ENCODE measurements at regions of chr20 and their contacts with region 1.

Region 1: DNA sequence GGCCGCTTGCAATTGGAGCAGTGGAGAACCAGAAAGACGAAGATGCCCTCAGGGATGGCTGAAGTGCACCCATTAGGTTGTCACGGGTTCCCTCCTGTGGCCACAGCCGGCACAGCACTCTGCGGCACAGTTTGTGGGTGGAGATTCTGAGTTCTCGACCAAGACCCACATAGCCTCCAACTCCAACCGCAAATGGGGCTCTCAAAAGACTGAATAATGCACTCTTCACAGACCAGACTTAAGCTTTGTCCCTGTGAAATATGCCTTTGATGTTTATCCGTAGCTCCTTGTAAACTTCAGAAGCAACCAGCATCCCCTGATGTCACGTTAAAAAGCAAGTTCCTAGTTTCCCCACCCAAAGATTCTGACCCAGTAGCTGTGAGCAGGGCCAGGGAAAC is 934 bp upstream of the CST9 start:
- DNase-seq: peak; percentile 77 to 84
- ATAC-seq: peak; percentile 85 to 94 (median 89)
- H3K4me3 ChIP-seq: no peak overlapping the region
- H3K27ac ChIP-seq: no peak overlapping the region
- H3K4me1 ChIP-seq: peaks cover 0 to 10% (median 0%) of the 10 kb centered on the region in 9 donors
- H3K27me3 ChIP-seq: peaks cover 0 to 24% (median 10%) of the 10 kb centered on the region in 7 donors
- CTCF ChIP-seq: peak; percentile 80 to 92 (median 89)

Region 2: GRCh38 chr20:22684072-22684762 is 922.4 kb before region 1 on chr20:
- intact Hi-C with region 1: loop called in 1 of 10 experiments (anchors 10 kb)
- DNase-seq: peak; percentile 48 to 69
- ATAC-seq: peak; percentile 71 to 87 (median 81)
- H3K4me3 ChIP-seq: no peak overlapping the region
- H3K27ac ChIP-seq: no peak overlapping the region
- H3K4me1 ChIP-seq: peaks cover 0 to 22% (median 11%) of the 10 kb centered on the region in 9 donors
- H3K27me3 ChIP-seq: peaks cover 0 to 17% (median 3%) of the 10 kb centered on the region in 7 donors
- CTCF ChIP-seq: peak; percentile 83 to 90 (median 87)

Region 3: DNA sequence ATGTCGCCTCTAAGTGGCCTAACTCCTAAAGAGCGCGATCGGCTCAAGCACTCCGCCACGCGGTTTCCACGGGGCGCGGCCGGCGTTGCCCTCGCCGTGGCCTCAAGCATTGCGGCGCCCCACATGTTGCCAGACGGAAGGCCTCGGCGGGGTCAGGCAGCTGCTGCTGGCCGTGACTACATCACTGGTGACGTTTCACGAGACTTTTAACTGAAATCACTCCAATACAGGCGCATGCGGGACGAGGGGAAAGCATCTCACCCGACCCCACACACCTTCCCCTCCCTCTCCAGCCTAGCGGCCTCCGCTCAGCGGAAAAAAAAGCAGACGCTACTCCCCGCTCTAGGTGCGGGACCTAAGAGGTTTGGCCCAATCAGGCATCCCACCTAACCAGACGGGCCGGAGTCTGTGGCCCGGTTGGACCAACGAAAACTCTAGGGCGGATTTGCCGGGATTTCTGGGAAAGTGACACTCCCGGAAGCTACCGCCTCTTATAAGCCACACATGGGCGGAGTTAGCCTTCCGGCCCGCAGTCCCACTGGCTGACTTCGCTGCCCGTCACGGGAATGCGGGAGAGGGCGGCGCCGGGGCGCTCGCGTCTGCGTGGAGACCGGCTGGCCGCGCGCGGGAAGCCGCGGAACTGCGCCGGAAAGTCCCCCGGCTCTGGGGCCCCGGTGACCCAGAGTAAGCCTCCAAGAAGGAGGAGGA is 256.3 kb before region 1 on chr20 and contains the start of gene NXT1:
- intact Hi-C with region 1: loop called in 3 of 10 experiments (anchors 5 kb)
- DNase-seq: peak; percentile 97 to 98
- ATAC-seq: peak; percentile 93 to 97 (median 96)
- H3K4me3 ChIP-seq: peak within 1 kb of the TSS; percentile 78 to 97 (median 86)
- H3K27ac ChIP-seq: peak within 1 kb of the TSS; percentile 88 to 100 (median 98)
- H3K4me1 ChIP-seq: peaks cover 3 to 29% (median 24%) of the 10 kb centered on the region in 9 donors
- H3K27me3 ChIP-seq: no peaks in the 10 kb centered on the region
- CTCF ChIP-seq: no peak
- total RNA-seq, gene NXT1: 4.5 to 12.9 (median 6.5) TPM

Region 4: GRCh38 chr20:23361598-23362384 is 244.9 kb before region 1 on chr20 and contains the start of gene GZF1:
- intact Hi-C with region 1: loop called in 1 of 10 experiments (anchors 10 kb)
- DNase-seq: peak; percentile 97 to 99
- ATAC-seq: peak; percentile 85 to 95 (median 90)
- H3K4me3 ChIP-seq: peak within 1 kb of the TSS; percentile 64 to 93 (median 87)
- H3K27ac ChIP-seq: peak within 1 kb of the TSS; percentile 97 to 100 (median 100)
- H3K4me1 ChIP-seq: peaks cover 10 to 81% (median 59%) of the 10 kb centered on the region in 9 donors
- H3K27me3 ChIP-seq: no peaks in the 10 kb centered on the region
- CTCF ChIP-seq: peak in 5 of 9 donors; percentile 2 to 35 (median 13)
- total RNA-seq, gene GZF1: 20.6 to 42.7 (median 28.8) TPM

Region 5: DNA sequence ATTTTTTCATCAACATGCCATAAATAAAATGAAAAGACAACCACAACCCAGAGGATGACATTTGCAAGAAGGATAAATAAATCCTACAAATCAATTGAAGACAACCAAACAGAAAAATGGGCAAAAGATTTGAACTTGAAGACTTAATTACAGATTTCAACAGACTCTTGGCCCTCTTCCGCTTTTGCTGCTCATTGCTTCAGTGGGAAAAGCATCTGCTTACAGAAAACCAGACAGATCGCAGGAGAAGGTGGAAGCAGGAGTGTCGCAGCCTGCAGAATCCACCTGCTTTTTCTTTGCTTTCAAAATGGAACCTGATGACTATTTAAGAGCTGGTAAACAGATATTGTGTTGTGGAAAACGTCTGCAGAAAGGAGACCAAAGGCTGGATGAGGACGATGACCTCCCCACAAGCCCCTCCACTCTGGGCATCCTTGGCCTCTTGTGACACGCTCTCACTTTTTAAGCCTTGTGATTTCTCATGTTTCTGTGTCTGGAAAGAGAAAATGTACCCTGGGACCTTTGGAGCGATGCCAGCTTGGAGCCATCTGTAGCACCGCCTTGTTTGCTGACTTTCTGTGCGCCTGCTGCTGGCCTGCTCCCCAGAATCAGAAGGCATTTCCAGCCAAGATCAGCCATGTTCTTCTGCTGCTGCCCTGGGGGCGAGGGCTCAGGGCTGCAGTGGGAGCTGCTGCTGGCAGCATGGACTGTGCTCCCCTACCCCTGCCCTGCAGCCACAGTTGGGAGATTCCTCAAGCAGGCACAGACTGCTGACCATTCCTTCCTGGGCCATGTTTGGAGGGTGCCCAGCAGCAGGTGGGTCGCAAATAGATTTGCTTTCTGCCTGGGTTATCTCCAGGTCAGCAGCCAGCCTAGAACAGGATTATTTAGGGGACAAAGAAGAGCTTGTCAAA is 170.8 kb before region 1 on chr20:
- intact Hi-C with region 1: loop called in 7 of 10 experiments (anchors 5 kb)
- DNase-seq: peak; percentile 24 to 29
- ATAC-seq: peak in 5 of 8 donors; percentile 22 to 52 (median 34)
- H3K4me3 ChIP-seq: no peak overlapping the region
- H3K27ac ChIP-seq: no peak overlapping the region
- H3K4me1 ChIP-seq: peaks cover 0 to 14% (median 3%) of the 10 kb centered on the region in 9 donors
- H3K27me3 ChIP-seq: no peaks in the 10 kb centered on the region
- CTCF ChIP-seq: no peak

Region 6: GRCh38 chr20:23441850-23442313 is 164.8 kb before region 1 on chr20:
- intact Hi-C with region 1: loop called (anchors 2 to 5 kb)
- DNase-seq: peak; percentile 31 to 72
- ATAC-seq: peak; percentile 59 to 82 (median 75)
- H3K4me3 ChIP-seq: no peak overlapping the region
- H3K27ac ChIP-seq: no peak overlapping the region
- H3K4me1 ChIP-seq: peaks cover 0 to 3% (median 0%) of the 10 kb centered on the region in 9 donors
- H3K27me3 ChIP-seq: no peaks in the 10 kb centered on the region
- CTCF ChIP-seq: peak; percentile 70 to 92 (median 86)

Region 7: GRCh38 chr20:23568320-23568970 is 38.2 kb before region 1 on chr20 and contains the start of gene CST9L:
- intact Hi-C with region 1: no loop called
- DNase-seq: no peak
- ATAC-seq: no peak
- H3K4me3 ChIP-seq: no peak within 1 kb of the TSS
- H3K27ac ChIP-seq: no peak within 1 kb of the TSS
- H3K4me1 ChIP-seq: no peaks in the 10 kb centered on the region
- H3K27me3 ChIP-seq: peaks cover 0 to 16% (median 0%) of the 10 kb centered on the region in 7 donors
- CTCF ChIP-seq: no peak
- total RNA-seq, gene CST9L: not detected

Region 8: GRCh38 chr20:23585808-23586734 is 20.6 kb before region 1 on chr20:
- intact Hi-C with region 1: no loop called
- DNase-seq: no peak
- ATAC-seq: no peak
- H3K4me3 ChIP-seq: no peak overlapping the region
- H3K27ac ChIP-seq: no peak overlapping the region
- H3K4me1 ChIP-seq: no peaks in the 10 kb centered on the region
- H3K27me3 ChIP-seq: peaks cover 0 to 39% (median 13%) of the 10 kb centered on the region in 7 donors
- CTCF ChIP-seq: no peak

Region 9: DNA sequence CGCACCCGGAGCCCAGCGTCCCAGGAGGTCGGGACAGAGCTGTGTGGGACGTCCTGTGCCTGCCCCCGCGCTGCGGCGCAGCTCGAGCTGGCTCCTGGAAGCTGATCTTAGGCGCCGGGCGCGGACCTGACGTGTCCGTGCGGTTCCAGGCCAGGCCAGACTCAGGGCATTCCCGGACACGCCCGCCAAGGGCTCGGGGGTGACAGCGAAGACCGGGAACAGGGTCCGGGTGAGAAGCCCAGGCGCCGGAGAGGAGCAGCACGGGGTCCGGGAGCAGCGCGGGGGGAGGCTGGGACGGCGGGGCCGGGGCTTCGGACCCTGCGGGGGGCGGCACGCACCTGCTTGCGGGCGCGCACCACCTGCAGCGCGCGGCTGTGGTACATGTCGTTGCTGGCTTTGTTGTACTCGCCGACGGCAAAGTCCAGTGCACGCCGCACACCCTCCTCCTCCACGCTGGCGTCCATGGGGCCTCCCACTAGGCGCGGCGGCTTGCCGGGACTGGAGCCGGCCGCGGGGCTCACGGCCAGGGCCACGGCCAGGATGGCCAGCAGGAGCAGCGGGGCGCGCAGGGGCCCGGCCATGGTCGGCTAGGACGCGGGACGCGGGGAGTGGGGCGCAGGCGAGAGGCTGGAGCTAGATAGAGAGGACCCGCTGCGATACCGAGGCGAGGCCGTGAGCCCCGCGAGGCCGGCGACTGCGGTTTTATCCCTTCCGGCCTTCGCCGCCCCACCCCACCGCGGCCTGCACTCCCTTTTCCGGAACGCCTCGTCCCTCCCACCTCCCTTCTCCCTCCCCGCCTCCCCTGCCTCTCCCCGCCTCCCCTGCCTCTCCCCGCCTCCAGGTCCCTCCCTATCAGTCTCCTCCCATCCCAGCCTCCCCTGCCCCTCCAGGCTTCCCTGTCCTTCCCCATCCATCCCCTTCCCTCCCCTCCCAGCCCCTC is 30.9 kb after region 1 on chr20 and contains the start of gene CST3:
- intact Hi-C with region 1: loop called in 1 of 10 experiments (anchors 2 kb)
- DNase-seq: peak; percentile 94
- ATAC-seq: peak; percentile 77 to 94 (median 90)
- H3K4me3 ChIP-seq: peak within 1 kb of the TSS; percentile 73 to 100 (median 93)
- H3K27ac ChIP-seq: peak within 1 kb of the TSS; percentile 92 to 100 (median 98)
- H3K4me1 ChIP-seq: peaks cover 5 to 61% (median 40%) of the 10 kb centered on the region in 9 donors
- H3K27me3 ChIP-seq: no peaks in the 10 kb centered on the region
- CTCF ChIP-seq: peak in 2 of 9 donors; percentile 6 to 8
- total RNA-seq, gene CST3: 395 to 1,066 (median 576) TPM

Region 10: DNA sequence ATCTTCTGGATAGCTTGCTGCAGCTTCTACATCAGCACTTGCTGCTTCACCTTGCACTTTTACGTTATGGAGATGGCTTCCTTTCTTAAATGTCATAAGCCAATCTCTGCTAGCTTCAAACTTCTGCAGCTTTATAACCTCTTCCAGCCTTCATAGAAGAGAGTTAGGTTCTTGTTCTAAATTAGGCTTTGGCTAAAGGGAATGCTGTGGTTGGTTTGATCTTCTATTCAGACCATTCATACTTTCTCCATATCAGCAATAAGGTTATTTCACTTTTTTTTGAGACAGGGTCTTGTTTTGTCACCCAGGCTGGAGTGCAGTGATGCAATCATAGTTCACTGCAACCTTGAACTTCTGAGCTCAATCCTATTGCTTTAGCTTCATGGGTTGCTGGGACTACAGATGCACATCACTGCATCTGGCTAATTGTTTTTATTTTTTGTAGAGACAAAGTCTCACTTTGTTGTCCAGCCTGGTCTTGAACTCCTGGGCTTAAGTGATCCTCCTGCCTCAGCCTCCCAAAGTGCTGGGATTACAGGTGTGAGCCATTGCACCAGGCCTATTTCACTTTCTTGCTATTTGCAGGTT is 43.3 kb after region 1 on chr20:
- intact Hi-C with region 1: no loop called
- DNase-seq: no peak
- ATAC-seq: no peak
- H3K4me3 ChIP-seq: no peak overlapping the region
- H3K27ac ChIP-seq: no peak overlapping the region
- H3K4me1 ChIP-seq: peaks cover 3 to 39% (median 16%) of the 10 kb centered on the region in 9 donors
- H3K27me3 ChIP-seq: no peaks in the 10 kb centered on the region
- CTCF ChIP-seq: no peak

Region 11: DNA sequence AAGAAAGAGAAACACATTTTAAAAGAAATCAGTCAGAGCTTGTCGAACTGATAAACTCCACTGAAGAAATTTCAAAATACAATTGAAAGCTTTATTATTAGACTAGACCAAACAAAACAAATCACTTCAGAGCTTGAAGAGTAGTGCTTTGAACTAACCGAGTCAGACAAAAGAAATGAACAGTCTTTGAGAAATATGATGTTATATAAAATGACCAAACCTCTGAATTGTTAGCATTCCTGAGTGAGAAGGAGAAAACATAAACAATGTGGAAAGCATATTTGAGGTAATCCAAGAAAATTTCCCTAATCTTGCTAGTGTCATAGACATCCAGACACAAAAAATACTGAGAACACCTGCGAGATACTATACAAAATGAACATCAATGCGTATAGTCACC is 95.4 kb after region 1 on chr20:
- intact Hi-C with region 1: no loop called
- DNase-seq: no peak
- ATAC-seq: no peak
- H3K4me3 ChIP-seq: no peak overlapping the region
- H3K27ac ChIP-seq: no peak overlapping the region
- H3K4me1 ChIP-seq: no peaks in the 10 kb centered on the region
- H3K27me3 ChIP-seq: peaks cover 0 to 6% (median 0%) of the 10 kb centered on the region in 7 donors
- CTCF ChIP-seq: no peak

Measured in heart right ventricle (tissue), 16 donors.